ENCODE measurements at regions of chr5 and their contacts with region 1.

Region 1: DNA sequence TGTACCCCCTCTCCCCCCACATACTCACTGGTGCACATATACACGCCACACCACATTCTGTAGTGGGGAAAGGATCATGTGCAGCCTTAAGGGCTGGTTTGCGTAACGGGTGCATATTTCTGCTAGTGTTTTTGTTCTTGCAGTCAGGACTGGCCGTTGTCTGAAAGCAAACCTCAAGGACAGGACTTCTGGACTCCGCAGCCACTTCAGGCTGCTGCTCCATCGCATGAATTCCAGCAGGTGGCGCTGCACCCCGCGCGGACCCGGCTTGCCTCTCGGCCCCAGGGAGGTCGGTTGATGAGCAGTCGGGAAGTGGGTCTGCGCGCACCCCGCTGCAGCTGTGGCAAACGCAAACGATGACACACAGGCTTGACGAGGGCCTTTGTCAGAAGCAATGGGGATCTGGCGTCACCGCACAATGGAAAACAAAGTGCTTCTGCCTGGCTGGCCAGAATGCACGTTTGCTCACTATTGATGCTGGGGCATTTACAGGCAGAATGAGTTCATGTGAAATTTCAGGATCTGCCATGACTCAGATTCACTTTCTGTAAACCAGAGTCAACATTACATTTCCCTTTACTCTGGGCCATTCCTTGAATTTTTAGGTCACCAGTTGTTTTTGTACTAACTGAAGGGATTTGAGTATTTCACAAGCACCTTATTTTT is 36.3 kb upstream of the GLRX start:
- DNase-seq: peak; percentile 85 to 92
- ATAC-seq: peak; percentile 72 to 87 (median 83)
- H3K4me3 ChIP-seq: peak overlapping the region in 6 of 10 donors; percentile 26 to 43 (median 30)
- H3K27ac ChIP-seq: peak overlapping the region; percentile 87 to 94 (median 90)
- H3K4me1 ChIP-seq: peaks cover 12 to 82% (median 59%) of the 10 kb centered on the region in 9 donors
- H3K27me3 ChIP-seq: no peaks in the 10 kb centered on the region
- CTCF ChIP-seq: peak in 8 of 9 donors; percentile 97 to 99 (median 98)

Region 2: DNA sequence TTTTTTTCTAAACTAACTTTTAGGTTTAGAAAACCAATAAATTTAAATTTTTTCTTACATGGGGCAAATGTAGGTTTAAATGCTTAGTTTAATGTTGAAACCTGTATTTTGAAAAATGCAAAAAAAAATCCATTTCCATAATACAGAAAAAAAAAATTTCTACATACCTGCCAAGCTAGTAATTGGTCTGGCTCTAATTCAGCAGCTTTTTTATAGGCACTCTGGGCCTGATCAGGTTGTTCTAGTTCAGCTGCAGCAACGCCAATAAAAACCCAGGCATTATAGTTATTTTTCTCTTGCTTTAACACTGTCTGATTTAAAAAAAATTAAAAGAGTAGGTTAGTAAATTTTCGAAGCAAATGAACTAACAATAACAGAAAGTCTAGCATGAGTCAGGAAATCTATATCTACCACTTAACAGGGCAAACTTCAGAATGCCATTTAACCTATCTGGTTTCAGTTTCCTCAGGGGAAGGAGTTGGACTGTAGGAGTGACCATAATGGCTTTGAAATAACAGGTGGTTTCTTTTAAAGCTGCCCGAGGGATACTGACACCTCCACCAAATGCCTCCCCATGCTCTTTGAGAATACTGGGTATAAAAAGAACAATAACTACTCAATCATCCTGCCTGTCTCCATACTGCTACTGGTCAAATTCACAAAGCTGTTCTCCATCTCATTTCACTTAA is 315.6 kb before region 1 on chr5:
- intact Hi-C with region 1: no loop called
- DNase-seq: no peak
- ATAC-seq: no peak
- H3K4me3 ChIP-seq: no peak overlapping the region
- H3K27ac ChIP-seq: no peak overlapping the region
- H3K4me1 ChIP-seq: peaks cover 0 to 20% (median 4%) of the 10 kb centered on the region in 9 donors
- H3K27me3 ChIP-seq: no peaks in the 10 kb centered on the region
- CTCF ChIP-seq: no peak

Region 3: GRCh38 chr5:95730730-95731570 is 127.8 kb before region 1 on chr5 and contains the start of gene RHOBTB3:
- intact Hi-C with region 1: loop called in 1 of 10 experiments (anchors 2 kb)
- DNase-seq: peak; percentile 90 to 91
- ATAC-seq: peak; percentile 74 to 88 (median 78)
- H3K4me3 ChIP-seq: peak within 1 kb of the TSS; percentile 56 to 84 (median 78)
- H3K27ac ChIP-seq: peak within 1 kb of the TSS; percentile 79 to 98 (median 93)
- H3K4me1 ChIP-seq: peaks cover 0 to 75% (median 48%) of the 10 kb centered on the region in 9 donors
- H3K27me3 ChIP-seq: peaks cover 0 to 9% (median 0%) of the 10 kb centered on the region in 7 donors
- CTCF ChIP-seq: peak in 1 of 9 donors; percentile 25
- total RNA-seq, gene RHOBTB3: 73.1 to 124 (median 94.4) TPM

Region 4: GRCh38 chr5:95781101-95781583 is 77.7 kb before region 1 on chr5:
- intact Hi-C with region 1: no loop called
- DNase-seq: peak; percentile 68 to 84
- ATAC-seq: peak; percentile 88 to 95 (median 92)
- H3K4me3 ChIP-seq: no peak overlapping the region
- H3K27ac ChIP-seq: peak overlapping the region in 8 of 10 donors; percentile 5 to 77 (median 46)
- H3K4me1 ChIP-seq: peaks cover 0 to 52% (median 30%) of the 10 kb centered on the region in 9 donors
- H3K27me3 ChIP-seq: no peaks in the 10 kb centered on the region
- CTCF ChIP-seq: peak in 8 of 9 donors; percentile 70 to 96 (median 91)

Region 5: GRCh38 chr5:95961617-95962474 is 103.1 kb after region 1 on chr5 and contains the start of gene ELL2:
- intact Hi-C with region 1: loop called in 7 of 10 experiments (anchors 2 to 10 kb)
- DNase-seq: peak; percentile 97
- ATAC-seq: peak; percentile 90 to 96 (median 94)
- H3K4me3 ChIP-seq: peak within 1 kb of the TSS; percentile 71 to 96 (median 88)
- H3K27ac ChIP-seq: peak within 1 kb of the TSS; percentile 90 to 100 (median 98)
- H3K4me1 ChIP-seq: peaks cover 0 to 43% (median 32%) of the 10 kb centered on the region in 9 donors
- H3K27me3 ChIP-seq: no peaks in the 10 kb centered on the region
- CTCF ChIP-seq: no peak
- total RNA-seq, gene ELL2: 19.2 to 68.2 (median 27.2) TPM

Region 6: GRCh38 chr5:96235008-96235910 is 376.5 kb after region 1 on chr5:
- intact Hi-C with region 1: loop called in 1 of 10 experiments (anchors 10 kb)
- DNase-seq: no peak
- ATAC-seq: peak; percentile 91 to 98 (median 96)
- H3K4me3 ChIP-seq: peak overlapping the region in 1 of 10 donors; percentile 3
- H3K27ac ChIP-seq: peak overlapping the region; percentile 59 to 92 (median 77)
- H3K4me1 ChIP-seq: peaks cover 0 to 25% (median 17%) of the 10 kb centered on the region in 9 donors
- H3K27me3 ChIP-seq: no peaks in the 10 kb centered on the region
- CTCF ChIP-seq: no peak

Region 7: DNA sequence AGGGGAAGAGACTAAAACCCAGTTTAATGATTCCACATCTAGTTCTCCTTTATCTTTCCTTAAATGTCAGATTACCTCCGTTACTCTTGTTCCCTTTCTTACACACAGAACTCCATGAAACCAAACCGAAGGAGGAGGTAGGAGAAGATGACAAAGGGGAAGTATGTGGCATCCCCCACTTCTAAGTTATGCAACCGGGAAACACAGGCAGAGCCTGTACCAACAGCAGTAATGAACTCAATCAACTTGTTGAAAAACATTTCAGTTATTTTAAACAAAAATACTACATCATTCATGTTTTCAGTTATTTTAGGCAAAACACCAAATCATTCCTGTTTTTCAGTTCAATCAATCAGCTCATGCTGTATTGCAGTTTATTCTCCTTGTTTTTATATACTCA is 472.4 kb after region 1 on chr5:
- intact Hi-C with region 1: loop called in 8 of 10 experiments (anchors 1 to 5 kb)
- DNase-seq: no peak
- ATAC-seq: no peak
- H3K4me3 ChIP-seq: no peak overlapping the region
- H3K27ac ChIP-seq: peak overlapping the region in 1 of 10 donors; percentile 26
- H3K4me1 ChIP-seq: peaks cover 0 to 20% (median 4%) of the 10 kb centered on the region in 9 donors
- H3K27me3 ChIP-seq: no peaks in the 10 kb centered on the region
- CTCF ChIP-seq: no peak

Region 8: GRCh38 chr5:96601811-96602244 is 743.0 kb after region 1 on chr5:
- intact Hi-C with region 1: loop called in 8 of 10 experiments (anchors 2 to 10 kb)
- DNase-seq: peak in 1 of 2 donors; percentile 77
- ATAC-seq: peak; percentile 63 to 93 (median 88)
- H3K4me3 ChIP-seq: peak overlapping the region in 3 of 10 donors; percentile 16 to 29 (median 19)
- H3K27ac ChIP-seq: peak overlapping the region in 1 of 10 donors; percentile 6
- H3K4me1 ChIP-seq: peaks cover 0 to 16% (median 4%) of the 10 kb centered on the region in 9 donors
- H3K27me3 ChIP-seq: peaks cover 0 to 10% (median 0%) of the 10 kb centered on the region in 7 donors
- CTCF ChIP-seq: peak; percentile 67 to 87 (median 83)

Region 9: DNA sequence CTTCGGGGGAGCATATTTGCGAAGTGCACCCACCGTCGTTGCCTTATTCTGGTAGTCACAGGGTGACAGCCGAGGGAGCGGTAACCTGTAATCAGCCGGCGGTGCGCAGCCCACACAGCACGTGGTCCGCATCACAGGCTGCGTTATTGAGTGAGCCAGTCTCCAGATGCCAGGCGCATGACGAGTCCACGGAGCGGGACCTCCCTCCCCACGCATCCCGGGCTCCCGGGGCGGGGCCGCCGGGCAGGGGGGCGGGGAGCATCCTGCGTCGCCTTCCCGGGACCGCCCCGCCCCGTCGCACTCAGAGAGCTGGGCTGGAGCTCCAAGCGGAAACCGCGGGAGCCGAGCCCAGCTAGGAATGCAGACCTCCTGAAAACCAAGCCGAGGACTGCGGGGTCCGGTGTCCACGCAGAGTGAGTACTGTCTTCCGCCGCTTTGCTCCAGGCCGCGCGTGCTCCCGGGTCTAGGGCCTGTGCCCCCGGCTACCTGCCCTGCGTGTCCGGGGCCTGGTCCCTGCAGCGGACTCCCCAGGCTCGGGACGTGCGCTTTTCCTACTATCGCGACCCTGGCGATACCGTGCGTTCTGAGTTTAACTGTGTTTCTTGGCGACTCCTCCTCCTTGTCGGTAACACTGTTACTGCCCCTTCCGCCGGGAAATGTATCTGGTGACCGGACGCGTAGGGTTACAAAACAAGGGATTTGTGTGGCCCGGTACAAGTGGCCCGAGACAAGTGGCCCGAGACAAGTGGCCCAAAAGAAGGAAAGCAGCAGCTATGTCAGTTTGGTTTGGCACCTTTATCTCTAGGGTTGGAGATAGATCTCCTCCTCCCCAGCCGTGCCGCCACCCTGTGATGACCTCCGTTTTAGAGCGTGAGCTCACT is 843.9 kb after region 1 on chr5:
- intact Hi-C with region 1: loop called in 1 of 10 experiments (anchors 10 kb)
- DNase-seq: peak; percentile 94 to 95
- ATAC-seq: peak; percentile 97 to 99 (median 98)
- H3K4me3 ChIP-seq: peak overlapping the region; percentile 55 to 84 (median 72)
- H3K27ac ChIP-seq: peak overlapping the region; percentile 90 to 98 (median 95)
- H3K4me1 ChIP-seq: peaks cover 0 to 80% (median 46%) of the 10 kb centered on the region in 9 donors
- H3K27me3 ChIP-seq: no peaks in the 10 kb centered on the region
- CTCF ChIP-seq: no peak